ENCODE measurements at regions of chr4 and their contacts with region 1.

Region 1: DNA sequence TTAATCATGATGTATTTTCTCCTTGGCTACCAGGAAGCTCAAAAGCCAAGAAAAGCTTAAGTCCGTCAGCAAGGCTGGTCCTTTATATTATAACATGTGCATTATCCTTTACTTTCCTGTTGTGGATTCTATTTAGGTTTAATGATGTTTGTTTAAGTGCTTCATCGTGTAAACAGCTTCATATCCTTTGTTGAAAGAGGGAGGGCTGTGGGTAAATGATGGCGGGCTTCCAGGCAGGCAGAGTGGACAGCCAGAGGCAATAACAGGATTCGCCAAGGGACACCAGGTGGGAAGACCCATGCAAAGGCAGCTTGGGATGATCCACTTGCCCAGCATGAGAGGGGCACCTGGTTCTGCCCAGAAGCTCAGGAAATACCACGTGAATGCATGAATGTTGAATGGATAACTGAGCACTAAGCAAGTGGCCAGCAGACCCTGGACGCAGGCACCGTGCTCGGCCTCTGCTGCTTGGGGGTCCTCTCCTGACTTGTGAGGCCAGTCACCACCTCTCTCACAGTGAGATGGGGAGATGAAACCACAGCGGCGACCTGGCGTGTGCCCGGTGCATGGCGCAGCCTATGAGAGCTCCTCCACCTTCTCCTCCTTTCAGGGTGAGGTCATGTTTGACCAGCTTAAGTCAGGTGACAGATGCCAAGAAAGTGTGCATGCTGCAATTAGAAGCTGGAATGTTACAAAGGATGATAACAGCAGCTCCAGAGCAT is 75.7 kb downstream of the HMX1 start:
- DNase-seq: no peak
- ATAC-seq: no peak
- H3K4me3 Mint-ChIP-seq: no peak overlapping the region
- H3K27ac Mint-ChIP-seq: no peak overlapping the region
- H3K4me1 Mint-ChIP-seq: no peaks in the 10 kb centered on the region
- H3K27me3 Mint-ChIP-seq: no peaks in the 10 kb centered on the region
- CTCF ChIP-seq: no peak

Region 2: DNA sequence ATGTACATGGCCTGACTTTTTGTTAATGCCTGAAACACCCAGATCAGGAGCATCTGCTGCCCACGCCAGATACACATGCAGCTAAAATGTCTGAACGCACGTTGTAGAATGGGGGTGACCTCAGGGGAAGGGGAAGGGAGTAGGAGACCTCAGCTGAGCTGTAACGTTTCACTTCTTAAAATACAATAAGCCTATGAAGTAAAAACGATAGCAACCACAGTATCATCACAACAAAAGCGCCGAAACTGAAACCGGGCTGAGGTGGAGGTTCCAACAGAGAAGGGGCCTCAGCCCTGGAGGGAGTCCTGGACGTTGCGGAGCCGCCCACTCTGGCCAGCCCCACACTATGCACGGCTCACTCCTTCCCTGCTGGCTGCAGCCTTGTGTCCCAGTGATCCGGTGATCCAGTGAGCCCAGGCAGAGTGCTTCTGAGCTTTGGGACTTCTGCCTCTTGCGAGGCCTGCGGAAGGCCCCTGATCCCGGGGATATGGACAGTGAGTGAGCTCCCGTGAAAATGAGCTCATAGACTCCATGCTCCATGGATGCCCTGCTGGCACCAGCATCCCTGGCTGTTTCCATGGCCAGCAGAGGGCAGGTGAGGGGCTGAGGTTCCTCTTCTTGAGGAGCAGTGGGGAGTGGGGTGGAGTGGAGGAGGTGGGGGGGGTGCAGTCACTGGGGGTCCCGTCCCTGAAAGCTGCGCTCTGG is 23.7 kb after region 1 on chr4:
- CTCF ChIA-PET with region 1: interaction called, 14 read pairs
- POLR2A ChIA-PET with region 1: no interaction called
- DNase-seq: no peak
- ATAC-seq: peak; percentile 64
- H3K4me3 Mint-ChIP-seq: no peak overlapping the region
- H3K27ac Mint-ChIP-seq: no peak overlapping the region
- H3K4me1 Mint-ChIP-seq: no peaks in the 10 kb centered on the region
- H3K27me3 Mint-ChIP-seq: no peaks in the 10 kb centered on the region
- CTCF ChIP-seq: no peak

Region 3: DNA sequence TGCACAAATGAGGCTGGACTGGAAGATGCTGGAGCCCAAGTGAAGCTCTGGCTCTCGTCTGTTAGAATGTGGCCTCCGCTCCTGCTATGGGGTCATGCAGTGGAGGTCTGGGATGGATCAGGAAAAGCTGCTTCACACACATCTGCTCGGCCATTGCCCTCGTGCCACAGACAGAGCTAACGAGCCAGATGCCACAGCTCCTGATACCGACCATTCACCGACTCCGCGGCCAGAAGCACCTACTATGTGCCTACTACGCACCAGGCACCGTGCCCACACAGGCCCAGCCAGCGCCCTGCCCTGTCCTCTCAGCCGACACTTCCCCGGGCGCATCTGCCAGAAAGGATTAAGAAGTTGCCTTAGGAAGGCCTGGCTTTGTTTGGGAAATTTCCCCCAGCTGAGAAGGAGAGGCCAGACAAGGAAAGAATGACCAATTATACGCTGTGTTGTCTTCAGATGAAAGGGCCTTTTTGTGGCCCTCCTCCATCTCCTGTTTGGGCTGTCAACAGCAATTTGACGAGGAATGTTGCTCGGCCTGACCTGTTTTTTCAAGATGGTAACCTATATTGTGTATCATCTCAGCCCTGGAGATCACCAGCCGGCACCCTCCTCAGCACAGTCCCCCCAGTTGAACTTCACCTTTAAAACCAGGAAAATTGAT is 41.4 kb after region 1 on chr4:
- CTCF ChIA-PET with region 1: no interaction called
- POLR2A ChIA-PET with region 1: no interaction called
- DNase-seq: no peak
- ATAC-seq: peak; percentile 52
- H3K4me3 Mint-ChIP-seq: no peak overlapping the region
- H3K27ac Mint-ChIP-seq: no peak overlapping the region
- H3K4me1 Mint-ChIP-seq: peaks cover 11% of the 10 kb centered on the region
- H3K27me3 Mint-ChIP-seq: no peaks in the 10 kb centered on the region; the same call in 1 of the 2 replicates
- CTCF ChIP-seq: no peak

Measured in WTC11 (cell line).